Activated CD4-positive, alpha-beta memory T cell treated with anti-CD3 and anti-CD28 coated beads for 36 hours (primary cell): ENCODE measurements at regions of chr2 and their contacts with region 1.

Region 1: DNA sequence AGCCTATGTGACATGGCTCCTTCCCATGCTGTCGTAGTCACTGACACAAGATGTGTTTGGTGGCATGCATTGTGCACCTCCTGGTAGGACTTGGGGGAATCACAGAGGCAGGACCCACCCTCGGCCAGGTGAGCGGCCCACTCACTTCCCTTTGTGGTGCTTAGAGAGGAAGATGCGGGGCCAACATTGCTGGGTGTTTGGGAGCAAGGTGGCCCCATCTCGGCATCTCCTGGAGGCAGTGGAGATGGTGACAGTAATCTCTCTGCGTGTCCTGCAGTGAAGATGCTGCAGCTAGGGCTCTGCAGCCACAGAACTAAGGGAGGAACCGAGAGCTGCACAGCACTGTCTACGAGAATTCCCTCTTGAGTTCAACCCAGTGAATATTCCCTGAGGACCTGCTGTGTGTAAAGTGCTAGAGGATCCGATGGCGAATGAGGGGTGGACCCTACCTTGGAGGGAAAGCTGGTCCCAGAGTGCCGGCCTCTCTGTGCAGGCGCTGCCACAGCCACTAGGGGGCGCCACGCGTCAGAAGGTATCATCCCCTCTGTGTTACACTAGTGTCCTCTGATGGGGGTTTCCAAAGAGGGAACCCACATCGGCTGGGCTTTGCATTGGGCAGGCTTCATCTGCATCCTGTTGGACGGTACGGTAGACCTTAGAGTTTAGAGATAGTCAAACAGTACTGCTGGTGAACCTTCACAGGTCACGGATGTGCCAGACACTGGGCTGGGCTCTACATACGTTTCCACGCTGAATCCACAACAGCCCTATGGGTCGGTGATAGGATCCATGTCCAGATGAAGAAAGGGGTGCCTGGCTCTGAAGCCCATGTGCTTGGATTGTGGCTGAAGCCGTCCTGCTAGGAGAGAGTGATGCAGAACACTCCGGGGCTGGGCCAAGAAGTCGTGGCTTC is 39.2 kb downstream of the COA5 start:
- DNase-seq: peak; percentile 80
- H3K4me3 Mint-ChIP-seq: no peak overlapping the region
- H3K27ac Mint-ChIP-seq: peak overlapping the region; percentile 49
- H3K4me1 Mint-ChIP-seq: no peaks in the 10 kb centered on the region
- H3K27me3 Mint-ChIP-seq: no peaks in the 10 kb centered on the region

Region 2: DNA sequence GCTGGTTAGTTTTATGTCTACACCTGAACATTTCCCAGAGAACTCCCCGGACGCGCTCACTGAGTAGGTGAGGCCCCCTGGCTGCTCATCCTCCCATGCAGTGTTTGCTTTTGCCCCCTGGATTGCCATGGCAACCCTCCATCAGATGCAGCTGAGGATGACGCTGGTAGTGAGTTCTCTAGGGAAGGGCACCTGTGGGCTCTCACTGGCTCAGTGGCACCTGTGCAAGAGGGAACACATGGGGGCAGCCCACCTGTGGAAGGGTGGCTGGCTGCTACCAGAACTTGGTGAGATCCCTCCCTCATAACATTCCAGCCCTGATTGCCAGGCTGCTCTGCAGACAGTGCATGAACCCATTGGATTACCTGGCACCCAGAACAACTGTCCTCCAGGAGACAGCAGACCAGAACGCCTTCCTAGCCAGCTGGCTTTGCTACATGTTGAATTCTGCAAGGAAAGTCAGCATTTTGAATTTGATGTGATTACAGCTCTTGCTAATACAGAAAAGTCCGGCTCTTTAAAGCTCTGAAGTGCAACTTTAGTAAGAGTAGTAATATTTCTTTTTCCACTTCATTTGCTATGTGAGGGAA is 17.5 kb after region 1 on chr2:
- CTCF ChIA-PET with region 1: interaction called, 11 read pairs
- POLR2A ChIA-PET with region 1: no interaction called
- intact Hi-C with region 1: no loop called
- DNase-seq: no peak
- H3K4me3 Mint-ChIP-seq: no peak overlapping the region
- H3K27ac Mint-ChIP-seq: no peak overlapping the region
- H3K4me1 Mint-ChIP-seq: no peaks in the 10 kb centered on the region
- H3K27me3 Mint-ChIP-seq: no peaks in the 10 kb centered on the region

Region 3: DNA sequence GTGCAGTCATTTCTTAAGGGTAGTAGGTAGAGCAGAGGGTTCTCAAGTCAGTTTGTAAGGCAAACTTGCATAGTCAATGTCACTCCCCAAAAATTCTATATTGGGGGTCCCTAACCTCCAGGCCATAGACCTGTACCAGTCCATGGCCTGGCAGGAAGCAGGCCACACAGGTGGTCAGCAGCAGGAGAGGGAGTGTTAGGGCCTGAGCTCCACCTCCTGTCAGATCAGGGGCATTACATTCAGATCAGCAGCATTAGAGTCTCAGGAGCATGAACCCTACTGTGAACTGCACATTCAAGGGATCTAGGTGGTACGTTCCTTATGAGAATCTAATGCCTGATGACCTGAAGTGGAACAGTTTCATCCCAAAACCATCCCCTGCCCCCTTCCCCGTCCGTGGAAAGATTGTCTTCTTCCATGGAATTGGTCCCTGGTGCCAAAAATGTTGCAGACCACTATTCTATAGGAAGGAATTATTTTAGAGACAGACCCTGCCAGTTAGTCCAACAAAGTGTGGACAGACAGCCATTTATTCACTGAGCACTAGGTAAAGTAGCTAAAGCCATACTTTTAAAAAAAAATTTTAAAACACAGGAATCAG is 32.5 kb after region 1 on chr2:
- CTCF ChIA-PET with region 1: interaction called, 6 read pairs
- POLR2A ChIA-PET with region 1: no interaction called
- intact Hi-C with region 1: loop called (anchors 1 kb)
- DNase-seq: no peak
- H3K4me3 Mint-ChIP-seq: no peak overlapping the region
- H3K27ac Mint-ChIP-seq: no peak overlapping the region
- H3K4me1 Mint-ChIP-seq: peaks cover 29% of the 10 kb centered on the region
- H3K27me3 Mint-ChIP-seq: no peaks in the 10 kb centered on the region

Region 4: DNA sequence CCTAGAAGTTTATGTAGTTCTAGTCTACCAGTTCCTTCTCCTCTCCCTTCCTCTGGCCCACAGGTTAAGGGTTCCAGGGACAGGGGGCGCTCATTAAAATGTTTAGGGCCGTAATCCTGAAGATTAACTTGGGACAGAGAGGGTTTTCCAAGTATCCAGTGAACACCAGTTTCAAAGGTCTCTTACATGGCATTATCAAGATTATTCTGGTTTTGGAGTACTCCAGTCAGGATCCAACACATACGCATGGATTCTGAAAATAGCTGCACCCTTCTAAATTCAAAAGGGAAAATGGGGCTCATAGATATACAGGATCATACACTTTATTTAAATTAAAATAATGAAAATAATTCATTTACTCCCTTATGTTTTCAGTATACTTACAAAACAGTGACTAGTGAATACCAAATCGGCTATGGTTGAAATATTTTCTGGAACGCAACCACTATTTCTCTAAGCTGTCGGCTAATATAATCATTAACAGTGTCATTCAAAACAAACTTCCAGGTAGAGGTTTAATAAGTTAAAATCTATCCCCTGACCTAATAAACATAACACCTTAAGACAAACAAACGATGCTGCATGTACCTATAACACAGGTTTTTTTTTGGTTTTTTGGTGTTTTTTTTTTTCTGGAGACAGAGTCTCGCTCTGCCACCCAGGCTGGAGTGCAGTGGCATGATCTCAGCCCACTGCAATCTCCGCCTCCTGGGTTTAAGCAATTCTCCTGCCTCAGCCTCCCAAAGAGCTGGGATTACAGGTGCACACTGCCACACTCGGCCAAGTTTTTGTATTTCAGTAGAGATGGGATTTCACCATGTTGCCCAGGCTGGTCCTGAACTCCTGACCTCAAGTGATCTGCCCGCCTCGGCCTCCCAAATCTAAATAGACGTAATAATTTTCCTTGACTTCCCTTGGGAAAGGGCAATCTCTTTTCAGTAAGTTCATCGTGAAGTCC is 117.1 kb after region 1 on chr2:
- CTCF ChIA-PET with region 1: no interaction called
- POLR2A ChIA-PET with region 1: no interaction called
- intact Hi-C with region 1: no loop called
- DNase-seq: no peak
- H3K4me3 Mint-ChIP-seq: no peak overlapping the region
- H3K27ac Mint-ChIP-seq: peak overlapping the region; percentile 65
- H3K4me1 Mint-ChIP-seq: peaks cover 87% of the 10 kb centered on the region
- H3K27me3 Mint-ChIP-seq: no peaks in the 10 kb centered on the region

Region 5: DNA sequence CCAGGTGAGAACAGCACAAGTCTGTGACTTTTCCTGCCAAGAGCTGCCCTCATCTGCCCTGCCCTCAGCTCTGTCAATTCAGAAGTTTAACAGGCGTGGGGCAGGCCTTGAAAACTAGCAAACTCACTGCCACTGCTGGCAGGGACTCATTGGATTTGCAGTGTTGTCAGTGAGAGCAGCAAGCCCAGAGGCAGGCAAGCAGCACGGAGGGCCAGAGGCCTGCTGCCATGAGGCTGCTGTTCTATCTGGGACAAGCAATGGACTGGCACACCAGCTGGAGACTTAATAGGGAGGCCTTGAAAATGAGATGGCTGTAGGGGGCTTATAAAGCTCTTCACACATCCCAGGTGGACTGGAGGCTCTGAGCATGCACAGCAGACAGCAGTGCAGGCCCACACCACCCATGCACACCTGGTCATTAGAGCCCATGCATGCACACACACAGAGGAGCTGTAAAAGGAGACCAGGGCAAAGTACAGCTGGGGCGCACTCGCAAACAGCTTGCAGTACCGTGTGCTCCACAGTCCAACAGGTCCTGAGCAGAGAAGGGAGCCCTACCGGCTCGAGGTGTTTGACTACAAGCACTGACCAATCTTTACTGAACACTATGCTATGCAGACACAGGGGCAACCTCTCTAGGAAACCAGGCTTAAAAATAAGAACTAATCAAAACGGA is 133.1 kb after region 1 on chr2:
- CTCF ChIA-PET with region 1: no interaction called
- POLR2A ChIA-PET with region 1: no interaction called
- intact Hi-C with region 1: no loop called
- DNase-seq: no peak
- H3K4me3 Mint-ChIP-seq: no peak overlapping the region
- H3K27ac Mint-ChIP-seq: peak overlapping the region; percentile 66
- H3K4me1 Mint-ChIP-seq: peaks cover 70% of the 10 kb centered on the region
- H3K27me3 Mint-ChIP-seq: no peaks in the 10 kb centered on the region

Region 6: GRCh38 chr2:98903767-98904485 is 334.8 kb after region 1 on chr2:
- CTCF ChIA-PET with region 1: no interaction called
- POLR2A ChIA-PET with region 1: no interaction called
- intact Hi-C with region 1: no loop called
- DNase-seq: no peak
- H3K4me3 Mint-ChIP-seq: no peak overlapping the region
- H3K27ac Mint-ChIP-seq: no peak overlapping the region
- H3K4me1 Mint-ChIP-seq: peaks cover 4% of the 10 kb centered on the region
- H3K27me3 Mint-ChIP-seq: peaks cover 11% of the 10 kb centered on the region

Region 7: DNA sequence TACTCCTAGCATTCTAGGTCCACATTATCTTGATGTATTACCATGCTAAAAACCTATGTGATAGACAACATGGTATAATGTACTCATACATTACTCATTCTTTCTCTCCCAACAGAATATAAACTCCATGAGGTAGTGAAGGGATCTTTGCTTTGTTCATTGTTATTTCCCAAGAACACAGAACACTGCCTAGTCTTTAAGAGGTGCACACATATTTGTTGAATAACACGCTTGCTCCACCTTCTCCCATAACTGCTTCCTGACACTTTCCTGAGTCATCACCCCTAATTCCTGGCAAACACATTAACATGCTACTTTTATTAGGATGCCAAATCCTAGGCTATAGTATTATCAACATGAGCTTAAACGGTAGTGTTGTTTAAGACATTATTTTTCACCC is 879.4 kb after region 1 on chr2:
- CTCF ChIA-PET with region 1: no interaction called
- POLR2A ChIA-PET with region 1: no interaction called
- intact Hi-C with region 1: no loop called
- DNase-seq: no peak
- H3K4me3 Mint-ChIP-seq: no peak overlapping the region
- H3K27ac Mint-ChIP-seq: no peak overlapping the region
- H3K4me1 Mint-ChIP-seq: peaks cover 23% of the 10 kb centered on the region
- H3K27me3 Mint-ChIP-seq: no peaks in the 10 kb centered on the region